Breast epithelium (tissue), 4 donors: ENCODE measurements at regions of chr22 and their contacts with region 1.

Region 1: GRCh38 chr22:48659404-48659996 is 1168.2 kb downstream of the BRD1 start:
- DNase-seq: no peak
- H3K4me3 ChIP-seq: no peak overlapping the region
- H3K27ac ChIP-seq: no peak overlapping the region
- H3K4me1 ChIP-seq: no peaks in the 10 kb centered on the region
- H3K27me3 ChIP-seq: no peaks in the 10 kb centered on the region
- CTCF ChIP-seq: no peak
- POLR2A ChIP-seq: no peak

Region 2: DNA sequence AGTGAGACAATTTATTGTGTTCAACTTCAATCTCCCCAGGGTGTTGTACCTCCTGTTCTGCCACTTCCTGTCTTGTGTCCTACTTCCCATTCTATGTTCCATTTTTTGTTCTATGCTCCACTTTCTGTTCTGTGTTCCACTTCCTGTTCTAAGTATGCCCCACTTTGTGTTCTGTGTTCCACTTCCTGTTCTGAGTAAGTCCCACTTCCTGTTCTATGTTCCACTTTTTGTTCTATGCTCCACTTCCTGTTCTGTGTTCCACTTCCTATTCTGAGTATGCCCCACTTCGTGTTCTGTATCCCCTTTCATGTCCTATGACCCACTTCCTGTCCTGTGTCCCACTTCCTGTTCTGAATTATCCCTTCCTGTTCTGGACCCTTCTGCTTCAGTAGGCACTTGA is 1164.4 kb before region 1 on chr22:
- intact Hi-C with region 1: loop called (anchors 5 kb)
- DNase-seq: no peak
- H3K4me3 ChIP-seq: no peak overlapping the region
- H3K27ac ChIP-seq: no peak overlapping the region
- H3K4me1 ChIP-seq: no peaks in the 10 kb centered on the region
- H3K27me3 ChIP-seq: peaks cover 0 to 5% of the 10 kb centered on the region in 2 donors
- CTCF ChIP-seq: no peak
- POLR2A ChIP-seq: no peak